Heart left ventricle (tissue), 16 donors: ENCODE measurements at regions of chr18 and their contacts with region 1.

Region 1: DNA sequence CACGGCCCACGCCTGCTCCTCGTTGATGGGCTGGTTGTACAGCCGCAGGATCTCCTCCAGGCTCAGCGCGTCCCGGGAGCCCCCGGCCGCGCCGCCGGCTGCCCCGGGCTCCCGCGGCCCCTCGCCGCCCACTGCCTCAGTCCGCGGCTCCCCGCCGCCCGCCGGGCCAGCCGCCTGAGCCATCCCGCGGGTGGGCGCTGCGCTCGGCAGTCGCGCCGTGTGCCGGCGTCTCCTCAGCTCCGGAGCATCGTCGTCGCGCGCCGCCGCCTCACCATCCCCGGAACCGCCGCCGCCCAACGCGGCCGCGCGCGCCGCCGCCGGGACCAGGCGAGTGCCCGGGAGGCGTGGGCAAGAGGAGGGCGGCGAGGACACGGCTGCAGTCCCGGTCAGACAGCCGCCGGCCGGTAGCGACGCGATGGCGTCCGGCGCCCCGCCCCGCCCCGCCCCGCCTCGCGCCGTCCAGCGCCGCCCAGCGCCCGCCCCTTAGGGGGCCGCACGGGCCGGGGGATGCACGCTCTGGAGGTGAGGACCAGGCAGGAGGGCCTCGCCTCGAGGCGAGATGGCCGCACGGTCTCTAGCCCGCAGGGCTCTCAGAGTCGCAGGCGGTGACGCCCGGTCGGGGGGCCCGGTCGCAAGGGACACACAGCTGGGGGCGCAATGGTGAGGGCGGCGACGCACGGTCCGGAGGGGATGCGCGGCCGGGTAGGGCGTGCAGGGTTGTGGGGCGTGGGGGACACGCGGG is at the start of gene SPIRE1:
- DNase-seq: peak; percentile 82 to 89 (median 85)
- ATAC-seq: peak; percentile 83 to 94 (median 88)
- H3K4me3 ChIP-seq: peak within 1 kb of the TSS; percentile 61 to 95 (median 80)
- H3K27ac ChIP-seq: peak within 1 kb of the TSS; percentile 52 to 99 (median 96)
- H3K4me1 ChIP-seq: peaks cover 0 to 32% (median 17%) of the 10 kb centered on the region in 12 donors
- H3K27me3 ChIP-seq: no peaks in the 10 kb centered on the region
- CTCF ChIP-seq: peak in 5 of 12 donors; percentile 3 to 35 (median 28)
- POLR2A ChIP-seq: peak in 1 of 2 donors; percentile 58
- total RNA-seq, gene SPIRE1: 35.8 to 67.6 (median 48.0) TPM

Region 2: GRCh38 chr18:12271376-12272235 is 386.2 kb before region 1 on chr18:
- intact Hi-C with region 1: loop called in 1 of 10 experiments (anchors 5 kb)
- DNase-seq: peak; percentile 71 to 84 (median 79)
- ATAC-seq: peak; percentile 79 to 92 (median 87)
- H3K4me3 ChIP-seq: peak overlapping the region; percentile 23 to 64 (median 52)
- H3K27ac ChIP-seq: peak overlapping the region in 11 of 12 donors; percentile 15 to 83 (median 63)
- H3K4me1 ChIP-seq: peaks cover 0 to 9% (median 2%) of the 10 kb centered on the region in 12 donors
- H3K27me3 ChIP-seq: no peaks in the 10 kb centered on the region
- CTCF ChIP-seq: peak; percentile 57 to 90 (median 68)
- POLR2A ChIP-seq: no peak

Region 3: GRCh38 chr18:12391618-12392165 is 266.2 kb before region 1 on chr18:
- intact Hi-C with region 1: loop called (anchors 1 to 2 kb)
- DNase-seq: peak in 3 of 5 donors; percentile 37 to 54 (median 53)
- ATAC-seq: peak; percentile 85 to 95 (median 92)
- H3K4me3 ChIP-seq: no peak overlapping the region
- H3K27ac ChIP-seq: no peak overlapping the region
- H3K4me1 ChIP-seq: no peaks in the 10 kb centered on the region
- H3K27me3 ChIP-seq: no peaks in the 10 kb centered on the region
- CTCF ChIP-seq: peak; percentile 83 to 96 (median 90)
- POLR2A ChIP-seq: no peak

Region 4: DNA sequence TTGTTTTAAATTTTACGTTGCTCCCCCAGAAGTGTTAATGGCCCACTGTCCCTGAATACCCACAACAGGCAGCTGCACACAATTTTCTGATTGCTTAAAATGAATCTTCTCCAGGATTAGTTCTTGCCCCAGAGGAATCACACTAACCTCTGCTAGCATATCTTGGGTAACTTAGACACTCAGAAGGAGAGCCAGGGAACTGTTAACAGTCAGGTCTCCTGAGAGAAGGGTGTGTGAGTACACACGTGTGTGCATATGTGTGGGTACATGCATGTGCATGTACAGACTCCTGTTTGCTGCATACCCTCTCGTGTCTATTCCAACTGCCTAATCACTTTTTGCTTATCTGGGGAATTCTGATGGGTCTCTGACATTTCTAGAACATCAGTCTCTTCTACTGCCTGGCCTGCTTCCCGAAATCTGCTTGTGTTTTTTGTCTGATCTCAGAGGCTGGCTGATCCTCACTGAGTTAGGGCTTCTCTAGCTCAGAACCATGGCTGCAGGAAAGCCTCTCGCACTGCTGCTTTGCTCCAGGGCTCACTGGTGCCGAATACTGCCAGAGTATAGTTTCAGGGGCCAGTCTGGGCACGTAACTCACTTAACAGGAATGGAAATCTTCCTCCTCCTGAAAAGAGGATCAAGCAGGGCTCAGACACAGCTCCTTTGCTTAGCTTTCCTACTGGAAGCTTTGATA is 187.3 kb before region 1 on chr18:
- intact Hi-C with region 1: loop called in 1 of 10 experiments (anchors 10 kb)
- DNase-seq: no peak
- ATAC-seq: peak in 1 of 4 donors; percentile 76
- H3K4me3 ChIP-seq: no peak overlapping the region
- H3K27ac ChIP-seq: no peak overlapping the region
- H3K4me1 ChIP-seq: peaks cover 0 to 13% (median 0%) of the 10 kb centered on the region in 12 donors
- H3K27me3 ChIP-seq: no peaks in the 10 kb centered on the region
- CTCF ChIP-seq: no peak
- POLR2A ChIP-seq: no peak

Region 5: DNA sequence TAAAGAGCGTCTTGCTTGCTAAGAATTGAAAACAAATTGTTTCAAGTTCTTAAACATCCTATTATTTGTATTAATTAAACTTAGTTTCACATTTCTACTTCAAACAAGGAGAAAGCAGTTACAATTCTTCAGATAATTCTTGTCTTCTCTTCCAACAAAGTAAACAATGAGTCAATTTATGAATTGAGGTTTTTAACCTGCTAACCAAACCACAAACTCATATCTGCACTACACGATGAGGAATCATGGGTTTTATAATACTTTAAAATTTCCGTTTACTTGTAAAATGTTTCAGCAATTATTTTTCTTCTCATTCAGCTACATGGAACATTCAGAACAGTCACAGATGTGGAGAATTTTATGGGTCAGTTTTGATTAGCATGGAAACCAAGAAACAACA is 114.2 kb before region 1 on chr18:
- intact Hi-C with region 1: loop called in 5 of 10 experiments (anchors 2 to 10 kb)
- DNase-seq: no peak
- ATAC-seq: no peak
- H3K4me3 ChIP-seq: no peak overlapping the region
- H3K27ac ChIP-seq: no peak overlapping the region
- H3K4me1 ChIP-seq: no peaks in the 10 kb centered on the region
- H3K27me3 ChIP-seq: no peaks in the 10 kb centered on the region
- CTCF ChIP-seq: no peak
- POLR2A ChIP-seq: no peak

Region 6: GRCh38 chr18:12726774-12727550 is 69.1 kb after region 1 on chr18:
- intact Hi-C with region 1: no loop called
- DNase-seq: peak in 2 of 5 donors; percentile 44 to 49
- ATAC-seq: peak; percentile 37 to 68 (median 66)
- H3K4me3 ChIP-seq: no peak overlapping the region
- H3K27ac ChIP-seq: no peak overlapping the region
- H3K4me1 ChIP-seq: no peaks in the 10 kb centered on the region
- H3K27me3 ChIP-seq: no peaks in the 10 kb centered on the region
- CTCF ChIP-seq: peak; percentile 71 to 93 (median 87)
- POLR2A ChIP-seq: no peak